HEK293T (cell line): ENCODE measurements at regions of chr10 and their contacts with region 1.

Region 1: DNA sequence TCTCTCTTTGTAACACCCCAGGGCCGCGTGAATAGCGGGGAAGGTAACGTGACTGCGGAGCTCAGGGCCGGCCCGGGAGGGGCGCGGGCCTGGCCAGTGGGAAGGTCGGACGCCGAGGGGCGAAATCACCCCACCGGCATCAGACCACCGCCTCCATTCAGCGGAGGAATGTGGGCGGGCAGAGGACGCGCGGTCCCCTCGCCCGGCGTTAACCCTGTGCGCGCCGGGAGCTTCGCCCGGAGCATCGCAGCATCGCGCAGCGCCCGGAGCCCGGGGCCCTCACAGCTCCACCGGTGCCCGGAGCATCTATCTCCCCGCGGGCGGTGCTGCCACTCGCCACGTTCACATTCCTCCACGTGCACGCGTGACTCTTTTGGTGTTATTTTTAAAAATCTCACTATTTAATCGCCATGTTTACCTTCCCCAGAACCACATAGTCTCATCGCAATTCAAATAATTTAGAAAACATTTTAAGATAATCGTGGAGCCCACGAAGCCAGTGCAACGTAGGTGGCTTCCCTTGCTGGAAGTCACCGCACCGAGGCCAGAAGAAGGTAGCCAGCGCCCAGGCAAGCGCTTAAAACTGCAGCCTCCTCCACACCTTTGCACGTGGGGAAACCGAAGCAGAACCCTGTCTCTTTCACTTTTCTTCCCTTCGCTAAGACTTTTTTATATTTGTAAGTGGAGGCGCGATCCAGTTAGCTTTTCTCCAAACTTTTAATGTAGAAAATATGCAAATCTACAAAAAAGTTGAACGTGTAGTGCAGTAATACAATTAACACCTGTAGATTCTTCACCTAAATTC is 21.8 kb downstream of the FGFBP3 start:
- DNase-seq: peak; percentile 63

Region 2: GRCh38 chr10:91643700-91644099 is 243.8 kb before region 1 on chr10:
- CTCF ChIA-PET with region 1: no interaction called
- POLR2A ChIA-PET with region 1: no interaction called
- DNase-seq: no peak

Region 3: GRCh38 chr10:91908337-91909116 is 21.1 kb after region 1 on chr10:
- CTCF ChIA-PET with region 1: no interaction called
- POLR2A ChIA-PET with region 1: interaction called, 15 read pairs
- DNase-seq: peak; percentile 80

Region 4: DNA sequence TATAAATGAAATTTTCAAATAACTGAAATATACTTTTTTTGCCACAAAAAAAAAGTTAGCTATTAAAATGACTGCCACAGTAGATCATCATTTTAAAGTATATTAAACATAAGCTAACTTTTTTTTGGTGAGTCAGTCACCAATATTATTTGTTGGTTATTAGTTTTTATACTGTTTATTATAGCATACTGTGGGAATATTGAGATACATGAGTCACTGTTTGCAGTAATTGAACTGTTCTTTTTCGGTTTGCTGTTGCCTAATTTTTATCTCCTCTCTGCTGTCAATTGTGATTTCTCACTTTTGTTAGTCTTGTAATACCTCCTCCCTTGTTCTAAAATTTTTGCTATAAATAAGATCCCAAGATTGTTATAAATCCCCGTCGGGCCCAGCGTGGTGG is 81.8 kb after region 1 on chr10:
- CTCF ChIA-PET with region 1: no interaction called
- POLR2A ChIA-PET with region 1: no interaction called
- DNase-seq: no peak